ENCODE measurements at regions of chr4 and their contacts with region 1.

Region 1: DNA sequence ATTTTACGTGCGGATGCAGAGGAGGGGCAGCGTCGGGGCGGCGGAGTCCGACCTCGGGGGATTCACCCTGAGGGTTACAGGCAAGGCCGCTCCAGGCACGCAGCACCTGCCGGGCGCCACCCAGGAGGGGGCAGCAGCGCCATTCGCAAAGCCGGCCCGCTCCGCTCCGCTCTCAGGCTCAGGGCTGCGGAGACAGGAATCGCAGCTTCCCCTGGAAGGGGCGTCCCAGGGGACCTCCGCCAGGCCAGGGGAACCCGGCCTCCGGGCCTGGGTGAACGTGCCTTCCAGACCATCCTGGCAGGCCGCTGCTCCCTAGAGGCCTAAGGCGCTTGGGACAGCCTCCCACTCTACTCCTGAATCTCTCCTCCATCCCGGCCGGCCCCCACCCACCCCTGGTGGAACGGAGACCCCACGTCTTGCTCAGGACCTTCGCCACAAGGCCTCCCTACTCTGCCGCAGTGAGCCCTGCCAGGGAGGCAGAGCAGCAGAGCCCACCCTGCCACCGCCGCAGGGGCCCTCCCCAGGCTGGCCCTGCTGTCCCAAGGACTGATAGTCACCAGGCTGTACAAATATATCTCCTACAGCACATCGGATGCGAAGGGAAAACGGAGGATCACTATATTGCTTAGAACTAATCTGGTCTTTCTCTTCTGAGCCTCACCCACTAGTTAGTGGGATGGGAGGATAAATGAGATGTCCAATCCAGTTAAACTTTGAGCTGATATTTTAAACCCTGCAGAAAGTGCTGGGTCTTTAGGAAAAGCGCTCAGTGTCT is 115.0 kb downstream of the SMIM20 start:
- DNase-seq: peak; percentile 54 to 92 (median 78)
- ATAC-seq: peak; percentile 88 to 97 (median 93)
- H3K4me3 ChIP-seq: peak overlapping the region in 1 of 4 donors; percentile 25
- H3K27ac ChIP-seq: no peak overlapping the region
- H3K4me1 ChIP-seq: peaks cover 0 to 16% (median 6%) of the 10 kb centered on the region in 3 donors
- H3K27me3 ChIP-seq: no peaks in the 10 kb centered on the region
- CTCF ChIP-seq: peak; percentile 42 to 78 (median 64)

Region 2: DNA sequence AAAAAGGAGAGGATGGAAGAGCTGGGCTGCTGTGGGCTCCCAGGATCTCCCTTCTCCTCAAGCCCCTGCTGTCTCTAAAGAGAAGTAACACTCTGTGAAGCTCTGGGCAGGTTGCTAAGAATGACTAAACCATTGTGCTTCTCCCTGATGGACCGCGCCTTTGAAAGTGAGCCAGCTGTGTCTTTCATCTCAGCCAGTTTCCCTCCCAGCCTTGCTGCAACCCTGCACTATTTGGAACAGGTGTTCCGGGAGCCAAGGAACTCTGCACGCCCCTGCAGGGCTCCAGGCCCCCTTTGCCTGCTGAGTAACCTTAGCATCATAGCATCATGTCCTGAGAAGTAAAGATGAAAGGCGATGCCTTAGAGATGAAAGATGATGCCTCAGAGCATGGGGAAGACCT is 75.2 kb before region 1 on chr4:
- intact Hi-C with region 1: no loop called
- DNase-seq: no peak
- ATAC-seq: peak in 1 of 4 donors; percentile 29
- H3K4me3 ChIP-seq: no peak overlapping the region
- H3K27ac ChIP-seq: no peak overlapping the region
- H3K4me1 ChIP-seq: no peaks in the 10 kb centered on the region
- H3K27me3 ChIP-seq: no peaks in the 10 kb centered on the region
- CTCF ChIP-seq: no peak

Region 3: DNA sequence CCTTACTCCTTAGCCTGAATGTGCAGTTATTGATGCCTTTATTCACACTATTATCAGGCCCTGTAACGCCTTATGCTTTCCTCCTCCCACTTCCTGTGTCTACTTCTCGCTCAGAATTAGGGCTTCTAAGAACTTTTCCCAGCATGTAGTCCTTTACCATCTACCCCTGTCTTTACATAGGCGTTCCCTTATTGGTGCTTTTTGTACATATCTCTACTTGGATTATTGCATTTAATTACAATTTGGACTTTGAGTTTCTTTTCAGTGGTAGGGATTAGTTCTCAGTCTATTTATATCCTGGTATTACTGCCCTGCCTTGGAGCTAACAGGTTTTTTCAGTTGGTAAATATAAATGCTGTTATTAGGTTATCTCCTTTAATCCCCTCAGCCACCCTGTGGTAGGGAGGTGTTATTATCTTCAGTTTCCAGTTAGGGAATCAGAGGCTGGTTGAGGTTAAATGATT is 375.8 kb after region 1 on chr4:
- intact Hi-C with region 1: loop called in 1 of 3 experiments (anchors 10 kb)
- DNase-seq: no peak
- ATAC-seq: peak in 2 of 4 donors; percentile 48 to 76
- H3K4me3 ChIP-seq: no peak overlapping the region
- H3K27ac ChIP-seq: no peak overlapping the region
- H3K4me1 ChIP-seq: peaks cover 0 to 5% (median 4%) of the 10 kb centered on the region in 3 donors
- H3K27me3 ChIP-seq: no peaks in the 10 kb centered on the region
- CTCF ChIP-seq: no peak

Measured in pancreas (tissue), 10 donors.